ENCODE measurements at regions of chr16 and their contacts with region 1.

Region 1: DNA sequence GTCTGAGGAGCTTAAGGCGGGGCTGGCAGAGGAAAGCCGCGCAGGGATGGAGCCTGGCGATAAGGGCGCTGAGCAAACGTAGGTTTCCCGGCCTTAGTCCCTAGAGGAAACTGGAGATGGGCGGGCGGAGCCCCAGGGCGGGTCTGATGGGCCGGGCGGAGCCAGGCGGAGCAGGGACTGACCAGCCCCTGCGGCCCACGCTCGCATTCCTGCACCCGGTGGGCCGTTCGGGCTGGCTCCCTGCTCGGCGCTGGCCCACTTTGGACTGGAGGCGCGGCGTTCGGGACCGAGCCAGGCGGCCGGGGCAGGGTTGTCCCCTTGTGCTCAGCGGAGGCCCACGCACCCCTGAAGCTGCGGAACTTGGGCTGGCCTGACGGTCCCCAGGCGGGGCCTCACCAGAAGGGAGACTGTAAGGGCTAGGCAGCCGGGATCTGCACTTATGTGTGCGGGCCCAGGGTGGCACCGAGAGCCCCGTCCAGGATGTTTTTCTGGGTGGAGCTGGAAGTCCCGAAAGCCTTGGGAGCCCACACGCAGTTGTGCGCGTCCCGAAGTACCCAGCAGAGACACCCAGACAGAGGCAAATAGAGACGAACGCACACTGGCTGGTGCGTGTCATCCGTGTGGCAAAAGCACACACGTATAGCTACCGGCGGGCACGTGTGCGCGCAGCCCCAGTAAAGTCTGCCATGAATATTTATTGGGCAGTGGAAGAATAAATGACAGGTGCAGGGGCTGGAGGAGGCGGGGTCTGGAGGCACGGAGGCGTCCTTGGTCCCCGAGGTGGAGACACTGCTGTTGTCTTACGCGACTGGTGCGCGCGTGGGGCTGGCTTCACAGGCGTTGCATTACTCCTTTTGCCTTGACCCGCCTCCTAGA is 1.4 kb downstream of the PYDC1 start:
- DNase-seq: peak in 1 of 5 donors; percentile 26
- H3K4me3 ChIP-seq: peak overlapping the region; percentile 61
- H3K4me3 Mint-ChIP-seq: peak overlapping the region; percentile 63 to 87 (median 76)
- H3K27ac ChIP-seq: peak overlapping the region; percentile 38
- H3K27ac Mint-ChIP-seq: peak overlapping the region in 1 of 8 donors; percentile 47
- H3K4me1 ChIP-seq: peaks cover 20% of the 10 kb centered on the region
- H3K4me1 Mint-ChIP-seq: peaks cover 18 to 23% (median 21%) of the 10 kb centered on the region in 3 donors
- H3K27me3 ChIP-seq: peaks cover 31% of the 10 kb centered on the region
- H3K27me3 Mint-ChIP-seq: peaks cover 39 to 48% of the 10 kb centered on the region in 2 donors

Region 2: GRCh38 chr16:31202414-31203375 is 12.8 kb before region 1 on chr16 and contains the start of gene PYCARD:
- CTCF ChIA-PET with region 1: interaction called, 11 read pairs
- POLR2A ChIA-PET with region 1: interaction called, 6 read pairs
- DNase-seq: peak; percentile 17 to 53 (median 31)
- H3K4me3 ChIP-seq: peak within 1 kb of the TSS; percentile 83
- H3K4me3 Mint-ChIP-seq: peak within 1 kb of the TSS; percentile 80 to 96 (median 89)
- H3K27ac ChIP-seq: peak within 1 kb of the TSS; percentile 61
- H3K27ac Mint-ChIP-seq: peak within 1 kb of the TSS; percentile 65 to 96 (median 82)
- H3K4me1 ChIP-seq: peaks cover 40% of the 10 kb centered on the region
- H3K4me1 Mint-ChIP-seq: peaks cover 41 to 57% (median 47%) of the 10 kb centered on the region in 3 donors
- H3K27me3 ChIP-seq: no peaks in the 10 kb centered on the region
- H3K27me3 Mint-ChIP-seq: no peaks in the 10 kb centered on the region
- total RNA-seq, gene PYCARD: 4.5 to 5.9 TPM

Region 3: DNA sequence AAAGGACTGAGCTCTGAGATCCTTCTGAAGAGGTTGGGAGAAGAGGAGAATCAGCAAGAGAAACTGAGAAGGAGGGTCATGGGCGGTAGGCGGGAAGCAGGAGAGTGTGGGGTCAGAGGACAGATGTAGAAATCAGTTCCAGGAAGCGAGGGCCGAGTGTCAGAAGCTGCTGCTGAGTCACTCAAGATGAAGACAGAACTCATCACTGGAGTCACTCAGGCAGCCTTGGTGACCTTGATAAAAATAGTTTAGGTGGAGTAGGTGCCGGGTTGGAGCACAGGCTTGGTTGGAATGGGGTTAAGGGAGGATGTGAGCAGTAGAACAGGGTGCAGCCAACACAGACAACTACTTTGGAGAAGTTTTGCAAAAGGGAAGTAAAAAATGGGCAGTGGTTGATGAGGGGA is 38.1 kb after region 1 on chr16:
- CTCF ChIA-PET with region 1: no interaction called
- POLR2A ChIA-PET with region 1: no interaction called
- DNase-seq: no peak
- H3K4me3 ChIP-seq: no peak overlapping the region
- H3K4me3 Mint-ChIP-seq: peak overlapping the region in 2 of 7 donors; percentile 33 to 34
- H3K27ac ChIP-seq: peak overlapping the region; percentile 54
- H3K27ac Mint-ChIP-seq: peak overlapping the region in 6 of 8 donors; percentile 29 to 87 (median 51)
- H3K4me1 ChIP-seq: peaks cover 8% of the 10 kb centered on the region
- H3K4me1 Mint-ChIP-seq: peaks cover 10 to 16% (median 11%) of the 10 kb centered on the region in 3 donors
- H3K27me3 ChIP-seq: no peaks in the 10 kb centered on the region
- H3K27me3 Mint-ChIP-seq: peaks cover 0 to 4% of the 10 kb centered on the region in 2 donors

Measured in CD8-positive, alpha-beta memory T cell (primary cell).